Heart left ventricle (tissue), 16 donors: ENCODE measurements at regions of chr4 and their contacts with region 1.

Region 1: GRCh38 chr4:7939377-7940108 is at the start of gene AFAP1:
- DNase-seq: peak; percentile 89 to 95 (median 92)
- ATAC-seq: peak; percentile 91 to 98 (median 96)
- H3K4me3 ChIP-seq: peak within 1 kb of the TSS; percentile 68 to 97 (median 84)
- H3K27ac ChIP-seq: peak within 1 kb of the TSS; percentile 39 to 96 (median 89)
- H3K4me1 ChIP-seq: peaks cover 0 to 30% (median 11%) of the 10 kb centered on the region in 12 donors
- H3K27me3 ChIP-seq: peaks cover 0 to 12% (median 0%) of the 10 kb centered on the region in 9 donors
- CTCF ChIP-seq: no peak
- POLR2A ChIP-seq: peak in 1 of 2 donors; percentile 73
- total RNA-seq, gene AFAP1: 4.5 to 18.0 (median 7.0) TPM

Region 2: DNA sequence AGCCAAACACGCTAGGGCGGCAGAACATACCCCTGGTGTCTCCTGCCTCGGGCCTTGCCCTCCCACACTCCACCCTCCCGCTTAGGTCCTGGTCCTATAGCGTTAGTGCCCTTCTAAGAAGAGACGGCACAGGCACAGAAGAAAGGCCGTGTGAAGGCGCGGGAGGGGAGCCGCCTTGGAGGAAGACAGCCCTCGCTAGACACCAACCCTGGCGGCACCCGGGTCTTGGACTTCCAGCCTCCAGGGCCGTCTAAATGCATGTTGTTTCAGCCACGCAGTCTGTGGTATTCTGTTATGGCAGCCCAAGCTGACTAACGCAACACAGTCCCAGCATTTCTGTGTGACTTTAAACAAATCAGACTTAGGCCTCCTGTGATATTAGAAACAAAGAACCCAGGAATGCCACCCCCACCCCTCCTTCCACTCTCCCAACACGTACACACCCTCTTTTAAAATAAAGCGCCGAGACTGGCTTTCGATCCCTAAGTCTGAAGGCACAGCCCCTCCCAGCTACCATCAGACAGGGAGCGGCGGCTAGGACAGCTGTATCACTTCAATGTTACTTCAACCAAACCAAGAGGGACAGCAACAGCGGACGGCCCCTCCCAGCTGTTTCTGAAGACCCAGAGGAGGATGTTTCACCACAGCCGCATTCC is 127.9 kb before region 1 on chr4:
- intact Hi-C with region 1: loop called in 2 of 10 experiments (anchors 5 to 10 kb)
- DNase-seq: peak; percentile 66 to 85 (median 75)
- ATAC-seq: peak; percentile 47 to 80 (median 74)
- H3K4me3 ChIP-seq: peak overlapping the region in 2 of 12 donors; percentile 8 to 30
- H3K27ac ChIP-seq: peak overlapping the region; percentile 24 to 93 (median 74)
- H3K4me1 ChIP-seq: peaks cover 0 to 50% (median 19%) of the 10 kb centered on the region in 12 donors
- H3K27me3 ChIP-seq: no peaks in the 10 kb centered on the region
- CTCF ChIP-seq: no peak
- POLR2A ChIP-seq: no peak

Region 3: GRCh38 chr4:7861440-7861881 is 78.1 kb before region 1 on chr4:
- intact Hi-C with region 1: loop called in 1 of 10 experiments (anchors 10 kb)
- DNase-seq: peak in 2 of 5 donors; percentile 34 to 47
- ATAC-seq: peak in 3 of 4 donors; percentile 29 to 53 (median 38)
- H3K4me3 ChIP-seq: no peak overlapping the region
- H3K27ac ChIP-seq: peak overlapping the region in 6 of 12 donors; percentile 0 to 60 (median 32)
- H3K4me1 ChIP-seq: peaks cover 0 to 47% (median 14%) of the 10 kb centered on the region in 12 donors
- H3K27me3 ChIP-seq: no peaks in the 10 kb centered on the region
- CTCF ChIP-seq: no peak
- POLR2A ChIP-seq: no peak

Region 4: GRCh38 chr4:7876201-7876875 is 63.2 kb before region 1 on chr4:
- intact Hi-C with region 1: loop called in 1 of 10 experiments (anchors 5 kb)
- DNase-seq: no peak
- ATAC-seq: peak in 3 of 4 donors; percentile 53 to 66 (median 56)
- H3K4me3 ChIP-seq: peak overlapping the region in 2 of 12 donors; percentile 21 to 23
- H3K27ac ChIP-seq: peak overlapping the region in 6 of 12 donors; percentile 30 to 69 (median 37)
- H3K4me1 ChIP-seq: peaks cover 0 to 68% (median 18%) of the 10 kb centered on the region in 12 donors
- H3K27me3 ChIP-seq: no peaks in the 10 kb centered on the region
- CTCF ChIP-seq: peak in 3 of 12 donors; percentile 17 to 42 (median 22)
- POLR2A ChIP-seq: no peak

Region 5: GRCh38 chr4:7973545-7973981 is 34.0 kb after region 1 on chr4:
- intact Hi-C with region 1: loop called in 1 of 10 experiments (anchors 5 kb)
- DNase-seq: peak in 1 of 5 donors; percentile 31
- ATAC-seq: no peak
- H3K4me3 ChIP-seq: no peak overlapping the region
- H3K27ac ChIP-seq: no peak overlapping the region
- H3K4me1 ChIP-seq: peaks cover 5 to 44% (median 28%) of the 10 kb centered on the region in 12 donors
- H3K27me3 ChIP-seq: no peaks in the 10 kb centered on the region
- CTCF ChIP-seq: no peak
- POLR2A ChIP-seq: no peak

Region 6: GRCh38 chr4:7987148-7987989 is 47.8 kb after region 1 on chr4:
- intact Hi-C with region 1: loop called in 1 of 10 experiments (anchors 5 kb)
- DNase-seq: peak; percentile 64 to 72 (median 67)
- ATAC-seq: peak; percentile 46 to 79 (median 75)
- H3K4me3 ChIP-seq: no peak overlapping the region
- H3K27ac ChIP-seq: no peak overlapping the region
- H3K4me1 ChIP-seq: peaks cover 0 to 13% (median 7%) of the 10 kb centered on the region in 12 donors
- H3K27me3 ChIP-seq: no peaks in the 10 kb centered on the region
- CTCF ChIP-seq: peak; percentile 75 to 93 (median 86)
- POLR2A ChIP-seq: no peak